Activated T-helper 2 cell treated with anti-CD3 and anti-CD28 coated beads, Interferon-gamma antibody, Interleukin-2, Interleukin-4, amounts not matched to agents 10 μg/mL and 5 μg/mL and 100 μg/mL, durations not matched to agents 14 hours and 24 hours and 36 hours (primary cell): ENCODE measurements at regions of chr3 and their contacts with region 1.

Region 1: GRCh38 chr3:171561596-171562323 is 101.6 kb upstream of the TNIK start:
- DNase-seq: no peak
- H3K4me3 Mint-ChIP-seq: peak overlapping the region; percentile 58
- H3K27ac Mint-ChIP-seq: peak overlapping the region; percentile 98
- H3K4me1 Mint-ChIP-seq: peaks cover 55% of the 10 kb centered on the region
- H3K27me3 Mint-ChIP-seq: no peaks in the 10 kb centered on the region

Region 2: GRCh38 chr3:171248425-171249111 is 313.2 kb before region 1 on chr3:
- intact Hi-C with region 1: loop called (anchors 5 kb)
- DNase-seq: no peak
- H3K4me3 Mint-ChIP-seq: no peak overlapping the region
- H3K27ac Mint-ChIP-seq: no peak overlapping the region
- H3K4me1 Mint-ChIP-seq: peaks cover 40% of the 10 kb centered on the region
- H3K27me3 Mint-ChIP-seq: no peaks in the 10 kb centered on the region

Region 3: DNA sequence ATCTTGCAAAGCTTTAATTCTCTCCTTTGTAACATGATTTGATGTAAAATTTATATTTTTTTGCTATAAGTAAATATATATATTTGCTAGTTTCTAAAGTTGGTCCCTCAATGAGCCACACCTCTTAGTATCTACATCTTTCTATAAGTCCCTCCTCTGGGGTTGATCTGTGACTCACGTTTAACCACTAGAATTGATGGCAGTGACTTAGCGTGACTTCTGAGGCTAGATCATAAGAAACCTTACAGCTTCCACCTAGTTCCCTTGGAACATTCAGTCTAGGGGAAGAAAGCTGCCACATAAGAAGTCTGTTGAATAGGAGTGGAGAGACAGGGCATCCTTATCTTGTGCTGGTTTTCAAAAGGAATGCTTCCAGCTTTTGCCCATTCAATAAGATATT is 45.0 kb before region 1 on chr3:
- intact Hi-C with region 1: loop called (anchors 5 kb)
- DNase-seq: no peak
- H3K4me3 Mint-ChIP-seq: no peak overlapping the region
- H3K27ac Mint-ChIP-seq: no peak overlapping the region
- H3K4me1 Mint-ChIP-seq: peaks cover 7% of the 10 kb centered on the region
- H3K27me3 Mint-ChIP-seq: peaks cover 22% of the 10 kb centered on the region